Activated T-helper 1 cell treated with anti-CD3 and anti-CD28 coated beads, Interleukin-12 subunit alpha, Interleukin-12 subunit beta, Interleukin-2, Interleukin-4 antibody, amounts not matched to agents 30 ng/mL and 10 ng/mL and 1 ng/mL, durations not matched to agents 14 hours and 24 hours and 36 hours (primary cell): ENCODE measurements at regions of chr2 and their contacts with region 1.

Region 1: GRCh38 chr2:230864598-230865306 is at the start of gene ITM2C:
- DNase-seq: peak; percentile 61
- H3K4me3 Mint-ChIP-seq: peak within 1 kb of the TSS; percentile 90
- H3K27ac Mint-ChIP-seq: peak within 1 kb of the TSS; percentile 71
- H3K4me1 Mint-ChIP-seq: peaks cover 24% of the 10 kb centered on the region
- H3K27me3 Mint-ChIP-seq: peaks cover 61% of the 10 kb centered on the region
- total RNA-seq, gene ITM2C: 4.2 and 5.2 TPM in 2 replicates

Region 2: DNA sequence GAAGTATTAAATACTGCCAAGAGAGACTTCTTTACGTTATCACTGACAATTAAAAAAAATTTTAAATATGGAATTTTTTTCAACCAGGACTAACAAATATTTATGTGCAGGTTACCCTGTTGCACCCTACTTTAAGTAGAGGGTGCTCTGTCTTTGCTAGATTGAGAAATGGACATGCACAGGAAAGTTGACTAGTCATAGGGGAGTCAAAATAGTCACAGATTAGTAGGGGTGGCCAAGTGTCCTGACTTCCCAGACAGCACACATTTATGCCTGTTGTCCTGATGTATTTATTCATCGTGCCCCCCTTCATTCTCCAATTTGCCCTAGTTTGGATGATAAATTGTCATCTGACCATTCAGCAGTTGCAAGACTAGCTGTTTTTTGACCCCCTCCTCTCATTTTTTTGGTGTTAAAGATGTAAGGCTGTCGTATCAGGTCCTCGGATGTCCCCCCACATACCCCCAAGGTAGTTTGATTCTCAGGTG is 131.8 kb before region 1 on chr2:
- intact Hi-C with region 1: no loop called
- DNase-seq: no peak
- H3K4me3 Mint-ChIP-seq: no peak overlapping the region
- H3K27ac Mint-ChIP-seq: peak overlapping the region; percentile 53
- H3K4me1 Mint-ChIP-seq: peaks cover 67% of the 10 kb centered on the region
- H3K27me3 Mint-ChIP-seq: no peaks in the 10 kb centered on the region

Region 3: GRCh38 chr2:230847883-230848388 is 16.8 kb before region 1 on chr2:
- intact Hi-C with region 1: loop called (anchors 1 kb)
- DNase-seq: peak; percentile 75
- H3K4me3 Mint-ChIP-seq: no peak overlapping the region
- H3K27ac Mint-ChIP-seq: no peak overlapping the region
- H3K4me1 Mint-ChIP-seq: peaks cover 22% of the 10 kb centered on the region
- H3K27me3 Mint-ChIP-seq: peaks cover 60% of the 10 kb centered on the region